CD8-positive, alpha-beta T cell (primary cell): ENCODE measurements at regions of chr16 and their contacts with region 1.

Region 1: DNA sequence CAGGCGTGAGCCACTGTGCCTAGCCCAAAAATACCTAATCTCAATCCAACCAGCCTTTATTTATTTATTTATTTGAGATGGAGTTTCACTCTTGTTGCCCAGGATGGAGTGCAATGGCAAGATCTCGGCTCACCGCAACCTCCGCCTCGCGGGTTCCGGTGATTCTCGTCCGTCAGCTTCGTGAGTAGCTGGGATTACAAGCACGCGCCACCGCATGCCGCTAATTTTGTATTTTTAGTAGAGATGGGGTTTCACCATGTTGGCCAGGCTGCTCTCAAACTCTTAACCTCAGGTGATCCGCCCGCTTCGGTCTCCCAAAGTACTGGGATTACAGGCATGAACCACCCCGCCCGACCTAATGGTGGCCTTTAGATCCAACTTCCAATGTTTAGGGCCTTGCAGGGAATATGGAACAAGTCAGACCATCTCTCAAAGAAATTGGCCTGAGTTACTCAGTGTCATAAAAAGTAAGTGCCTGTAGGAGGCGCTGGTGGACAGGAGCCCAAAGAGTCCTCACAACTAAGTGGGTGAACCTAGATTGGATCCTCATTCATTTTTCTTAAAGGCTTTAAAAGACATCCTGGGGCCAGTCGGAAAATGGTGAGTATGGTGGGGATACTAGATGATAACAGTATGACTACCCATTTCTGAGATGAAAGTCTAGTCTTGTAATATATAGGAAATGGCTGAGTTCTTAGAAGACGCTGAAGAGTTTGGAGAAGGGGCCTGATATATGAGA is 4.6 kb downstream of the ZSCAN10 start:
- DNase-seq: peak in 6 of 9 experiments; percentile 19 to 80 (median 62)
- ATAC-seq: peak; percentile 61
- H3K4me3 ChIP-seq: no peak overlapping the region
- H3K4me3 Mint-ChIP-seq: no peak overlapping the region
- H3K27ac ChIP-seq: no peak overlapping the region
- H3K27ac Mint-ChIP-seq: peak overlapping the region; percentile 43
- H3K4me1 ChIP-seq: peaks cover 27% of the 10 kb centered on the region
- H3K4me1 Mint-ChIP-seq: peaks cover 38% of the 10 kb centered on the region
- H3K27me3 ChIP-seq: no peaks in the 10 kb centered on the region
- H3K27me3 Mint-ChIP-seq: no peaks in the 10 kb centered on the region
- CTCF ChIP-seq: peak; percentile 55

Region 2: DNA sequence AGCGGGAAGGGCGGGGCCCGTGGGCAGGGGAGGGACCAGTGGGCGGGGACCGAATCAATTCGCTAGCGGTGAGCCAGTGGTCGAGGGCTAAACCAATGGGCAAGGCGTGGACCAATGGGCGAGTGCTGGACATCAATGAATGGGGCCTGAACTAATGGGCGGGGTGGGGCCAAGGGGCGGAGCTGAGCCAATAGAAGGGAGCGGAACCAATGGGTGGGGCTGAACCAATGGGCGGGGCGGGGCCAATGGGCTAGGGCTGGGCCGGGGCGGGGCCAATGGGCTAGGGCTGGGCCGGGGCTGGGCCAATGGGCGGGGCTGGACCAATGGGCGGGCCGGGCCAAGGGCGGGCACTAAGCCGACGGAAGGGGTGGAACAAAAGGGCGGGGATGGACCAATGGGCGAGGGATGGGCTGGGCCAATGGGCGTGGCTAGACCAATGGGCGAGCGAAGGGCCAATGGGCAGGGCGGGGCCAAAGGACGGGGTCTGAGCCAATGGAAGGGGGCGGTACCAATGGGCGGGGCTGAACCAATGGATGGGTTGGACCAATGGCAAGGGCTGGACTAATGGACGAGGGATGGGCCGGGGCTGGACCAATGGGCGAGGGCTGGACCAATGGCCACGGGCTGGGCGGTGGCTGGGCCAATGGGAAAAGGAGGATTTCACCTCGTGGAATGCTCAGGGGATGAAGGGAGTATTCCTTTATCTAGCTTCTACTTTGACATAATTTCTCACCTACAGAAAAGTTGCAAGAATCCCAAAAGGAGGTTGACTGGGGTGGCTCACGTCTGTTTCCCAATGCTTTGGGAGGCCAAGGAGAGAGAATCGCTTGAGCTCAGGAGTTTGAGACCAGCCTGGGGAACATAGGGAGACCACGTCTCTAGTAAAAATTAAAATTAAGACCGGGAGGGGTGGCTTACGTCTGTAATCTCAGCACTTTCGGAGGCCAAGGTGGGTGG is 188.7 kb before region 1 on chr16:
- CTCF ChIA-PET with region 1: no interaction called
- POLR2A ChIA-PET with region 1: no interaction called
- intact Hi-C with region 1: loop called in 1 of 2 experiments (anchors 2 kb)
- DNase-seq: peak; percentile 73 to 96 (median 85)
- ATAC-seq: peak; percentile 83
- H3K4me3 ChIP-seq: peak overlapping the region; percentile 86 to 88
- H3K4me3 Mint-ChIP-seq: peak overlapping the region; percentile 91
- H3K27ac ChIP-seq: peak overlapping the region in 1 of 2 experiments; percentile 22
- H3K27ac Mint-ChIP-seq: peak overlapping the region; percentile 55
- H3K4me1 ChIP-seq: peaks cover 11% of the 10 kb centered on the region
- H3K4me1 Mint-ChIP-seq: peaks cover 23% of the 10 kb centered on the region
- H3K27me3 ChIP-seq: peaks cover 0 to 2% of the 10 kb centered on the region in 2 experiments
- H3K27me3 Mint-ChIP-seq: no peaks in the 10 kb centered on the region
- CTCF ChIP-seq: no peak

Region 3: GRCh38 chr16:3065069-3065741 is 29.3 kb before region 1 on chr16 and contains the start of gene IL32:
- CTCF ChIA-PET with region 1: interaction called, 77 read pairs
- POLR2A ChIA-PET with region 1: interaction called, 8 read pairs
- intact Hi-C with region 1: no loop called
- DNase-seq: peak in 8 of 9 experiments; percentile 57 to 92 (median 72)
- ATAC-seq: peak; percentile 43
- H3K4me3 ChIP-seq: peak within 1 kb of the TSS; percentile 97 to 100
- H3K4me3 Mint-ChIP-seq: peak within 1 kb of the TSS; percentile 97
- H3K27ac ChIP-seq: peak within 1 kb of the TSS; percentile 82 to 100
- H3K27ac Mint-ChIP-seq: peak within 1 kb of the TSS; percentile 97
- H3K4me1 ChIP-seq: peaks cover 48% of the 10 kb centered on the region
- H3K4me1 Mint-ChIP-seq: peaks cover 58% of the 10 kb centered on the region
- H3K27me3 ChIP-seq: no peaks in the 10 kb centered on the region
- H3K27me3 Mint-ChIP-seq: no peaks in the 10 kb centered on the region
- CTCF ChIP-seq: no peak
- total RNA-seq, gene IL32: 123 to 127 TPM

Region 4: DNA sequence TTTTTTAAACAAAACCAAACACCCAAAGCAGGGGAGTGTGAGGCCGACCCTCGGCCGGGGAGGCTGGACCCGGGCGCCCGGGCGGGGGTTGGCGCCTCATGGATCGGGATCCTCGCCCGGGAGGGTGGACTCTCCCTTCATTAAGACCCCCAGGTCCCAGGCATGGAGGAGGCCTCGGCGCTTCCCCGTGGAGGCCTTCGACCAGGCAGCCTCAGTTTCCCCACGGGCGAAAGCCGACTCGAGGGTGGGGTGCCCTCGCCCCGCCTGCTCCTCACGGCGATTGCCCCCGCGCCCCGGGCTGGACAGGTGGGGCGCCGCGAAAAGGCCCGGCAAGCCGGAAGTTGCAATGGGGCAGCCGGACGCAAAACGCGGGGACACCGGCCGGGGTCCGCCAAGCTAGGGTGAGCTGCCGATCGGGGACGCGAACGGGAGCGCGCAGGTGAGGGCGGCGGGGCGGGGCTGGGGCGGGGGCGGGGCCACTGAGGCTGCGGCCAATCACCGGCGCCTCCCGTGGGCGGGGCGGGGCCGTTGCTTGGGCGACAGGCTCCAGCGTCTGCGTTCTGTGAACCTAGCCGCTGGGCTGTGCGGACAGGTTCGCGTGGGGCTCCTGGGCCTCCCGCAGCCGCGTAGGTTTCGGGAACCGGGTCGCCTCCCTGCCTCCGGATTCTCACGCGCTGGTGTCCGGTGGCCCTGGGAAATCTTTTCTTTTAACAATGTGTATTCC is 11.9 kb after region 1 on chr16:
- CTCF ChIA-PET with region 1: interaction called, 17 read pairs
- POLR2A ChIA-PET with region 1: interaction called, 5 read pairs
- intact Hi-C with region 1: no loop called
- DNase-seq: peak; percentile 79 to 95 (median 90)
- ATAC-seq: peak; percentile 94
- H3K4me3 ChIP-seq: peak overlapping the region; percentile 74 to 77
- H3K4me3 Mint-ChIP-seq: peak overlapping the region; percentile 86
- H3K27ac ChIP-seq: peak overlapping the region; percentile 75 to 93
- H3K27ac Mint-ChIP-seq: peak overlapping the region; percentile 89
- H3K4me1 ChIP-seq: peaks cover 24% of the 10 kb centered on the region
- H3K4me1 Mint-ChIP-seq: peaks cover 26% of the 10 kb centered on the region
- H3K27me3 ChIP-seq: no peaks in the 10 kb centered on the region
- H3K27me3 Mint-ChIP-seq: no peaks in the 10 kb centered on the region
- CTCF ChIP-seq: no peak

Region 5: DNA sequence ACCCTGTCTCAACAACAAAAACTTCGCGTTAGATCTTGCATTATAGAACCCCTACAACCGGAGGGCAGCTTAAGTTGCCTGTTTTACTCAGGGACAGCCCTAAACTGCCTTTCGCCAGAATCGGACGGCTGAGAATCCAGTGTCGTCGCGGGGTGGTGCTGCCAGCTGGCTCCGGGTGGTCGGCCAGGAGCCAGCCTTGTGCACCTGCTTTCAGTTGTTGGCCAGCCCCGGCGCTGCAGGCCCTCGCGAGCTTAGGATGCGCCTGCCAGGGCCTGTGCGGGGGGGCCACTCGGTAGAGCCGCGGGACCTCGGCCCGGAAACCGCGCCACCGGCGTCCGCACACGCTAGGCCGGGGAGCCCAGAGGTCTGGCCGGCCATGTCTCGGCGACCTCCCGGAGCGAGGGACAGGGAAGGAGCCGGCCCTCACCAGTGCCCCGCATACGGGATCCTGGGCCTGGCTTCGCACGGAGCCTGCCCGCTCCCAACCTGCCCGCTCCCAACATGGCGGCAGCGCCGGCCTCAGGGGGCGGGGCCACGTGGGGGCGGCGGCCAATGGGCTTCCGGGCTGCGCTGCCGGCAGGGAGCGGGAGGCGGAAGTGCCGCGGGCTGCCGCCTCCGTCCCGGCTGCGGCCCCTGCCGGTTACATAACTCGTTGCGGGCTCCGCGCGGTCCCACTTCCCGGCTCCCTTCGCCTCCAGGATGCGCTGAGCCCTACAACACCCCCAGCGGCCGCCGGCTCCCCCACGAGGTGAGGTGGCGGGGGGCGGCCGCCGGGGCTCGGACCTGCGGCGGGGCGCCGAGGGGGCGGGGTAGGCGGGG is 363.2 kb after region 1 on chr16:
- CTCF ChIA-PET with region 1: no interaction called
- POLR2A ChIA-PET with region 1: no interaction called
- intact Hi-C with region 1: loop called (anchors 1 kb)
- DNase-seq: peak; percentile 78 to 96 (median 90)
- ATAC-seq: peak; percentile 84
- H3K4me3 ChIP-seq: peak overlapping the region; percentile 71 to 72
- H3K4me3 Mint-ChIP-seq: peak overlapping the region; percentile 85
- H3K27ac ChIP-seq: peak overlapping the region; percentile 76 to 89
- H3K27ac Mint-ChIP-seq: peak overlapping the region; percentile 93
- H3K4me1 ChIP-seq: peaks cover 42% of the 10 kb centered on the region
- H3K4me1 Mint-ChIP-seq: peaks cover 52% of the 10 kb centered on the region
- H3K27me3 ChIP-seq: no peaks in the 10 kb centered on the region
- H3K27me3 Mint-ChIP-seq: no peaks in the 10 kb centered on the region
- CTCF ChIP-seq: peak; percentile 49